Heart right ventricle (tissue), 16 donors: ENCODE measurements at regions of chr12 and their contacts with region 1.

Region 1: DNA sequence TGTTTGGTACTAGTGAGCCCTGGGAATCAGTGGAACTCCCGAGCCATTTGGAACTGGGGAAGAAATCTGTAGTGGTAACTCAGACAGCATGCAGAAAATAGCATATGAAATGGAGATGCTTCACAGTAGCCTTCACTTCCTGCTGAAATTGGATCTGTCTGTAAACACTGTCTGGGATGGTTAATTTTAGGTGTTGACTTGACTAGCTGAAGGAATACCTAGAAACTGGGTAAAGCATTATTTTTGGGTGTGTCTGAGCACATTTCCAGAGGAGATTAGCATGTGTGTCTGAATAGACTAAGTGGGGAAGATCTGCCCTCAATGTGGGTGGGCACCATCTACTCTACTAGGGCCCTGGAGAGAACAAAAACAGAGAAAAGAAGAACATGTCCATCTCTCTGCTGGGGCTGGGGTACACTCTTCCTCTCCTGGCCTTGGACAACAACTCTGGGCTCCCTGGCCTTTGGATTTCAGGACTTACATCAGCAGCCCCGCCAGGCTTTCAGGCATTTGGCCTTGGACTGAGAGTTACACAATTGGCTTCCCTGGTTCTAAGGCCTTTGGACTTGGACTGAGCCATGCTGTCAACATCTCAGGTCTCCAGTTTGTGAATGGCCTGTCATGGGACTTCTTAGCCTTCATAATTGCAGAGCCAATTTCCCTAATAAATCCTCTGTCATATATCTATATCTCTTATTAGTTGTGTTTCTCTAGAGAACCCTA is 14.0 kb upstream of the CRADD start:
- DNase-seq: no peak
- ATAC-seq: peak in 6 of 8 donors; percentile 26 to 78 (median 43)
- H3K4me3 ChIP-seq: no peak overlapping the region
- H3K27ac ChIP-seq: no peak overlapping the region
- H3K4me1 ChIP-seq: peaks cover 0 to 5% (median 0%) of the 10 kb centered on the region in 9 donors
- H3K27me3 ChIP-seq: no peaks in the 10 kb centered on the region
- CTCF ChIP-seq: no peak

Region 2: DNA sequence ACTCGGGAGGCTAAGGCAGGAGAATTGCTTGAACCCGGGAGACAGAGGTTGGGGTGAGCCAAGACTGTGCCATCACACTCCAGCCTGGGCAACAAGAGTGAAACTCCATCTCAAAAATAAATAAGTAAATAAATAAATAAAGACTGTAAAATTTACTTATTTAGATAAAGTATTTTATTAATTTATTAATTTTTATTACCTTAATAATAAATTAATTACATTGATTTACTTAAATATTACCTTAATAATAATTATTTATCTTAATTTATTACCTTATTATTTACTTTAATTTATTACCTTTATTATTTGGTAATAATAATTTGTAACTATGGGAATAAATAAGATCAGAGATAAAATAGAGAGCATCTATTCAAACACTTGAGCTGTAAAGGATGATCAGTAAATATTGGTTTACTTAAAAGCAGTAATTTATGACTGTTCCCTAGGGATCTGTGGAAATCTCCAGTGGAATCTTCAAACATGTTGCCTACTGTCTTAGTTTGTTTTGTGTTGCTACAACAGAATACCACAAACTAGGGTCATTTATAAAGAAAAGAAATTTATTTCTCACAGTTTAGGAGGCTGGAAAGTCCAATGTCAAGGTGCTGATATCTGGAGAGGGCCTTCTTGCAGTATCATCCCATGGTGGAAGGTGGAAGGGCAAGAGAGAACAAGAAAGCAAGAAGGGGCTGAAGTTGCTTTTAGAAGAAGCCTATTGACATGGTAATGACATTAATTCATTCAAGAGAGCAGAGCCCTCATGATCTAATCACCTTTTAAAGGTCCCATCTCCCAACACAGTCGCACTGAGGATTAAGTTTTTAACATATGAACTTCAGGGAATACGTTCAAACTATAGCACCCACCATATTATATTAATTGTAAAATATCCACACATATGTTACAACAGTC is 53.6 kb before region 1 on chr12:
- intact Hi-C with region 1: loop called in 2 of 10 experiments (anchors 5 to 10 kb)
- DNase-seq: no peak
- ATAC-seq: no peak
- H3K4me3 ChIP-seq: no peak overlapping the region
- H3K27ac ChIP-seq: no peak overlapping the region
- H3K4me1 ChIP-seq: peaks cover 0 to 10% (median 0%) of the 10 kb centered on the region in 9 donors
- H3K27me3 ChIP-seq: no peaks in the 10 kb centered on the region
- CTCF ChIP-seq: no peak

Region 3: GRCh38 chr12:93707836-93708235 is 44.7 kb after region 1 on chr12:
- intact Hi-C with region 1: no loop called
- DNase-seq: no peak
- ATAC-seq: no peak
- H3K4me3 ChIP-seq: no peak overlapping the region
- H3K27ac ChIP-seq: peak overlapping the region in 1 of 10 donors; percentile 26
- H3K4me1 ChIP-seq: peaks cover 0 to 51% (median 32%) of the 10 kb centered on the region in 9 donors
- H3K27me3 ChIP-seq: no peaks in the 10 kb centered on the region
- CTCF ChIP-seq: no peak